Psoas muscle (tissue), 8 donors: ENCODE measurements at regions of chrX and their contacts with region 1.

Region 1: GRCh38 chrX:111869639-111870034 is 6.3 kb upstream of the TRPC5OS start:
- DNase-seq: no peak
- ATAC-seq: peak in 3 of 4 donors; percentile 63 to 83 (median 81)
- H3K4me3 ChIP-seq: no peak overlapping the region
- H3K27ac ChIP-seq: no peak overlapping the region
- H3K4me1 ChIP-seq: no peaks in the 10 kb centered on the region
- H3K27me3 ChIP-seq: peaks cover 0 to 21% (median 0%) of the 10 kb centered on the region in 3 donors
- CTCF ChIP-seq: peak; percentile 72

Region 2: DNA sequence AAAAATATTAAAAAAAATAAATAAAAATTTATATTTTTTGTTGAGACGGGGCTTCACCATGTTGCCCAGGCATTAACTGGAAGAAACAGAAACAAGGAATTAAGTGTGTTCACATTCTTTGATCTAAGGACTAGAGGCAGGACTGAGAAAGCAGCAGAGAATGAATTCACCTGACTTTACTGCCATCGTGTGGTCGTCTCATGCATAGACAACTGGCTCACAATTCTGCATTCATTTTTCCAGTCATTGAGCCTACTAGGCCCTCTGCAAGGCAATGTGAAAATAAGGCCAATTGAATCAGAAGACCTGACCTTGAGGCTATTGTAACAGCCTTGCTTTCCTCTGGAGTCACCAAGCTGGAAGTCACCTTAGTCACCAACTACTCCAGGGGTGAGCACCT is 772.7 kb after region 1 on chrX:
- intact Hi-C with region 1: loop called (anchors 5 kb)
- DNase-seq: no peak
- ATAC-seq: peak; percentile 75 to 89 (median 82)
- H3K4me3 ChIP-seq: no peak overlapping the region
- H3K27ac ChIP-seq: no peak overlapping the region
- H3K4me1 ChIP-seq: no peaks in the 10 kb centered on the region
- H3K27me3 ChIP-seq: no peaks in the 10 kb centered on the region
- CTCF ChIP-seq: peak; percentile 75